HCT116 (cell line): ENCODE measurements at regions of chr1 and their contacts with region 1.

Region 1: GRCh38 chr1:56578963-56579875 is at the start of gene PLPP3:
- DNase-seq: peak; percentile 66
- ATAC-seq: peak; percentile 91
- H3K4me3 ChIP-seq: peak within 1 kb of the TSS; percentile 60 to 71
- H3K27ac ChIP-seq: peak within 1 kb of the TSS; percentile 32
- H3K4me1 ChIP-seq: peaks cover 5 to 17% of the 10 kb centered on the region in 2 experiments; a peak in 3 of 4 replicates
- H3K27me3 ChIP-seq: no peaks in the 10 kb centered on the region
- CTCF ChIP-seq: peak; percentile 45 to 66 (median 52); a peak in 5 of 6 replicates
- POLR2A ChIP-seq: peak; percentile 90
- RAD21 ChIP-seq: peak; percentile 54
- total RNA-seq, gene PLPP3: 3.4 TPM

Region 2: DNA sequence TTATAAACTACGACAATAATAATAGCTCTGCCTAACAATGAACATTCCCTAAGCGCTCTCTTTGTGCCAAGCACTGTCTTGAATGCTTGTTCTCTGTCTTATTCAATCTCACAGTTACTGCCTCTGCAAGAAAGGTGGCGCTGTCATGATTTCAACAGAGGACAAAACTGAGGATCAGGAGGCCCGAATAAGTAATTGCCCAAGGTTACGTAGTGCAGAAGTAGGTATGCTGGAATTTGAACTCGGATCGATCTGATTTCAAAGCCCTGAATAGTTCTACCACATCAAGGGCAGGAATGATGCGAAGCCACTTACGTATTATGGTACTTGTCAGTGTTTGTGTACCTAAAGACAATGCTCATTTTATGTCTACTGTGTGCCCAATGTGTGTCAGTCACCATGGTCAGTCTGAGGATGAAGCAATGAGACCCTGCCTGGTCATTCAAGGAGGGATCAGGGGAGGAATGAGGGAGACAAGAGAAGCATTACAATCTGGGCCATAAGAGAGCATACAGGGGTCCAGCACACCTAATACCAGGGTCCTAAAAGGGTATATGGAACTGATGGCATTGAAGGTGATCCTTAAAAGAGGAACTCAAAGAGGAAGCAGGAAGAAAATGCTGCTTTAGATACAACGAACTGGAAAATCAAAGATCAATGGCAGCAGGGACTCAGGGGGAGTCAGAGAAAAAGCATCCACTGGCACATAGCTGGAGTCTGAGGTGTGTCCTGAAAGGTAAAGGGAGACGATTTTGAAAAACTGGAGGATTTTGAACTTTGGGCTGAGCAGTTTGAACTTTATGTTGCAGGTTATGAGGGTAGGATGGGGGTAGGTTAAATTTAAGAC is 389.1 kb before region 1 on chr1:
- CTCF ChIA-PET with region 1: no interaction called
- POLR2A ChIA-PET with region 1: no interaction called
- RAD21 ChIA-PET with region 1: no interaction called
- intact Hi-C with region 1: loop called (anchors 10 kb)
- DNase-seq: peak; percentile 6
- ATAC-seq: peak; percentile 67
- H3K4me3 ChIP-seq: no peak overlapping the region
- H3K27ac ChIP-seq: no peak overlapping the region
- H3K4me1 ChIP-seq: no peaks in the 10 kb centered on the region
- H3K27me3 ChIP-seq: no peaks in the 10 kb centered on the region
- CTCF ChIP-seq: peak; percentile 12 to 60 (median 54); a peak in 4 of 6 replicates
- POLR2A ChIP-seq: no peak
- RAD21 ChIP-seq: peak; percentile 32; the same call in 1 of the 2 replicates

Region 3: DNA sequence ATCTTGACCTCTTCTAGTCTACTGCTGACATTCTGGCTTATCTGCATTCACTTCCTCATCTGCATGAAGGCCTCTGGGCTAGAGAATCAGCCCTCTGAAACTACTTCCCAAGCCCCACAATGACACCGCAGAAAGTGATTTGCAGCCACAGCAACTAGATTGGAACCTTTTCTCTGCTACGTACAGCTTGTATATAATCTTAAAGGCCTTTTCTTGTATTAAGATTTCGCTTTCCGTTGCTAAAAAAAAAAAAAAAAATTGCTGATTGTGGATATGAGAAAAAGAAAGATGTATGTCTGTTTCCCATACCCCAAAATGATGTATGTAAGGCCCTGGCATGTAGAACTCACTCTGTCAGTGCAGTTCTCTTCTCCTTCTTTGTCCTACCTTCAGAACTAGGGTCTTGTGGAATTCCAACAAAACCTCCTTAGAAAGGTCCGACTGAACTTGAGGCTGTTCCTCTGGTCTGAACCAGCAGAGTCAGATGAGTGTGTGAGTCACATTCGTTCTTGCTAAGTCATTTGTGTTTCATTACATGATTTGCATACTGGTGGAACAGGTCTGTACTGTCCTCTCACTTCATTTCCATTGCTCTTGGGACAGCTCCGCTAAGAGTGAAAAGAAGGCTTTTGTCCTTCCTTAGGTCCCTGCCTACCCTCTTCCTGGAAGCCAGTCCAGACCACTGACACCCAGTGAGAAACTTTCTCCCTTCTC is 62.5 kb before region 1 on chr1:
- CTCF ChIA-PET with region 1: no interaction called
- POLR2A ChIA-PET with region 1: no interaction called
- RAD21 ChIA-PET with region 1: no interaction called
- intact Hi-C with region 1: no loop called
- DNase-seq: peak; percentile 71
- ATAC-seq: peak; percentile 90
- H3K4me3 ChIP-seq: peak overlapping the region in 1 of 2 experiments; percentile 37; a peak in 2 of 4 replicates
- H3K27ac ChIP-seq: peak overlapping the region; percentile 49; the same call in 1 of the 2 replicates
- H3K4me1 ChIP-seq: peaks cover 15 to 28% of the 10 kb centered on the region in 2 experiments; a peak in 3 of 4 replicates
- H3K27me3 ChIP-seq: no peaks in the 10 kb centered on the region
- CTCF ChIP-seq: no peak
- POLR2A ChIP-seq: no peak
- RAD21 ChIP-seq: no peak